HepG2 (cell line): ENCODE measurements at regions of chr10 and their contacts with region 1.

Region 1: DNA sequence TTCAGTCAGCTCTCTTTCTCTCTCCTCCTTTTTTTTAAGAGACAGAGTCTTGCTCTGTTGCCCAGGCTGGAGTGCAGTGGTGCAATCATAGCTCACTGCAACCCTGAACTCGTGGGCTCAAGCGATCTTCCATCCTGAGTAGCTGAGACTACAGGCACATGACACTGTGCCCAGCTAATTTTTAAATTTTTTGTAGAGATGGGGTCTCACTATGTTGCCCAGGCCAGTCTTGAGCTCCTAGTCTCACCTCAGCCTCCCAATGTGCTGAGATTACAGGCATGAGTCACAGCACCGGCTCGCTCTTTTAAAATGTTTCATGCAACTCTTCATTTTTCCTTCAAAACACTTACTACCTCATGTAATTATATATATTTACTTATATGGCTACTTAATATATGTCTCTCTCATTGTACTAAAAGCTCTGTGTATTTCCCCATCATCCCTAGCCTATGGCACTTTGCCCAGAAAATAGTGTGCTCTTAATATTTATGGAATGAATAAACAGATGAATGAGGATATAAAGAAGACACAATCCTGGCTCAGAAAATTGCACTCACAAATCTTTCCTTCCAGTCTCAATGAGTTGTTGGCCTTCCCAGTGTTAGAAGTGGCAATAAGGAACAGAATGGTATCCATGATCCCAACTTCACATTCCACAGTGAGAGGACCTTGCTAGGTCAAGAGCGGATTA is 33.9 kb downstream of the EBLN1 start:
- DNase-seq: no peak
- ATAC-seq: no peak
- H3K4me3 ChIP-seq: no peak overlapping the region
- H3K27ac ChIP-seq: no peak overlapping the region
- H3K4me1 ChIP-seq: no peaks in the 10 kb centered on the region
- H3K27me3 ChIP-seq: peaks cover 0 to 12% of the 10 kb centered on the region in 2 experiments; a peak in 2 of 5 replicates
- CTCF ChIP-seq: no peak
- EP300 ChIP-seq: no peak
- POLR2A ChIP-seq: no peak
- RAD21 ChIP-seq: no peak

Region 2: GRCh38 chr10:22218451-22218850 is 34.5 kb after region 1 on chr10:
- CTCF ChIA-PET with region 1: no interaction called
- POLR2A ChIA-PET with region 1: no interaction called
- in situ Hi-C with region 1: no loop called
- intact Hi-C with region 1: loop called (anchors 1 kb)
- DNase-seq: peak; percentile 6
- ATAC-seq: peak; percentile 68
- H3K4me3 ChIP-seq: no peak overlapping the region
- H3K27ac ChIP-seq: no peak overlapping the region
- H3K4me1 ChIP-seq: no peaks in the 10 kb centered on the region
- H3K27me3 ChIP-seq: no peaks in the 10 kb centered on the region
- CTCF ChIP-seq: no peak
- EP300 ChIP-seq: no peak
- POLR2A ChIP-seq: no peak
- RAD21 ChIP-seq: no peak

Region 3: GRCh38 chr10:22294695-22295094 is 110.8 kb after region 1 on chr10:
- CTCF ChIA-PET with region 1: no interaction called
- POLR2A ChIA-PET with region 1: no interaction called
- in situ Hi-C with region 1: no loop called
- intact Hi-C with region 1: no loop called
- DNase-seq: no peak
- ATAC-seq: no peak
- H3K4me3 ChIP-seq: no peak overlapping the region
- H3K27ac ChIP-seq: no peak overlapping the region
- H3K4me1 ChIP-seq: no peaks in the 10 kb centered on the region
- H3K27me3 ChIP-seq: no peaks in the 10 kb centered on the region
- CTCF ChIP-seq: no peak
- EP300 ChIP-seq: no peak
- POLR2A ChIP-seq: no peak
- RAD21 ChIP-seq: no peak